B cell (primary cell): ENCODE measurements at regions of chr19 and their contacts with region 1.

Region 1: DNA sequence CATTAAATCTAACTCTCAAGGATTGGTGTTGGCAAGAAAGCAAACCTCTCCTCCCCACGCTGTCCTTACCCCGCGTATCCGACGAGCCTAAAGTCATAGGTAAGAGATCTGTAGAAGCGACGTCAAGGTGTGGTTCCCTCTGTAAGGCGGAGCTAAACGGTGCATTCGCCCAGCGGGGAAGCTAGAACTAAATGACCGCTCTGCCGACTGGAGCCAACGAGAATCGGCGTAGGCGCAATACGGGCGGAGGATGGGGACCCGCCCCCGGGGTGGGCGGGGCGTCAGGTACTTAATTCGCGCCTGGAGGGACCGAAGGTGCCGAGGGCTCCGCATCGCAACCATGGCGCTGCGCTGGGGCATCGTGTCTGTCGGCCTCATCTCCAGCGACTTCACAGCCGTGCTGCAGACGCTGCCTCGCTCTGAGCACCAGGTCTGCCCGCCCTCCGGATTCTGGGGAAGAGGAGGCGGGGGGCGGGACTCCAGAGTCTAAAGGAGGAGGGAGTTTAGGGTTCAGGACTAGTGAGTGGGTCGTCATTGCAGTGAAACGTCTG is at the start of gene DHDH:
- DNase-seq: peak; percentile 87
- ATAC-seq: peak; percentile 98
- H3K4me3 ChIP-seq: peak within 1 kb of the TSS; percentile 32 to 67 (median 47)
- H3K4me3 Mint-ChIP-seq: peak within 1 kb of the TSS; percentile 91
- H3K27ac ChIP-seq: no peak within 1 kb of the TSS
- H3K27ac Mint-ChIP-seq: peak within 1 kb of the TSS; percentile 41
- H3K4me1 ChIP-seq: peaks cover 12 to 15% of the 10 kb centered on the region in 2 donors
- H3K4me1 Mint-ChIP-seq: peaks cover 11% of the 10 kb centered on the region
- H3K27me3 ChIP-seq: peaks cover 0 to 10% (median 3%) of the 10 kb centered on the region in 4 experiments
- H3K27me3 Mint-ChIP-seq: peaks cover 12% of the 10 kb centered on the region
- CTCF ChIP-seq: no peak
- total RNA-seq, gene DHDH: 0.64 TPM in 1 of 2 replicates, not detected in the other

Region 2: DNA sequence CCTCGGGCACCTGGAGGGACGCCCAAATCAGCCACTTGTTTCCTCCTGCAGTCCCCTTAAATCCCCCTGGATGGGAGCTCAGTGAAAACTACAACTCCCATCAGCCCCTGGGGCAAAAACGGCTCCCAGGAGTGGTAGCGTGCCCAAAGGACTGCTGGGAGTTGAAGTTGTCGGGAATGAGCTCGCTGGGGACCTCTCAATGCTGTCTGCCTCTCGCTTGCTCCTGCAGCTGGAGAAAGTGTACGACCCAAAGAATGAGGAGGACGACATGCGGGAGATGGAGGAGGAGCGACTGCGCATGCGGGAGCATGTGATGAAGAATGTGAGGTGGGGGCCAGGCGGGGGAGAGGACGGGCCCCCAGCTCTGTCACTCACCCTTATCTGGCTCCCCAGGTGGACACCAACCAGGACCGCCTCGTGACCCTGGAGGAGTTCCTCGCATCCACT is 14.6 kb before region 1 on chr19:
- CTCF ChIA-PET with region 1: no interaction called
- POLR2A ChIA-PET with region 1: no interaction called
- intact Hi-C with region 1: no loop called
- DNase-seq: no peak
- ATAC-seq: no peak
- H3K4me3 ChIP-seq: no peak overlapping the region
- H3K4me3 Mint-ChIP-seq: no peak overlapping the region
- H3K27ac ChIP-seq: no peak overlapping the region
- H3K27ac Mint-ChIP-seq: no peak overlapping the region
- H3K4me1 ChIP-seq: peaks cover 5 to 6% of the 10 kb centered on the region in 2 donors
- H3K4me1 Mint-ChIP-seq: peaks cover 11% of the 10 kb centered on the region
- H3K27me3 ChIP-seq: no peaks in the 10 kb centered on the region
- H3K27me3 Mint-ChIP-seq: no peaks in the 10 kb centered on the region
- CTCF ChIP-seq: no peak

Region 3: DNA sequence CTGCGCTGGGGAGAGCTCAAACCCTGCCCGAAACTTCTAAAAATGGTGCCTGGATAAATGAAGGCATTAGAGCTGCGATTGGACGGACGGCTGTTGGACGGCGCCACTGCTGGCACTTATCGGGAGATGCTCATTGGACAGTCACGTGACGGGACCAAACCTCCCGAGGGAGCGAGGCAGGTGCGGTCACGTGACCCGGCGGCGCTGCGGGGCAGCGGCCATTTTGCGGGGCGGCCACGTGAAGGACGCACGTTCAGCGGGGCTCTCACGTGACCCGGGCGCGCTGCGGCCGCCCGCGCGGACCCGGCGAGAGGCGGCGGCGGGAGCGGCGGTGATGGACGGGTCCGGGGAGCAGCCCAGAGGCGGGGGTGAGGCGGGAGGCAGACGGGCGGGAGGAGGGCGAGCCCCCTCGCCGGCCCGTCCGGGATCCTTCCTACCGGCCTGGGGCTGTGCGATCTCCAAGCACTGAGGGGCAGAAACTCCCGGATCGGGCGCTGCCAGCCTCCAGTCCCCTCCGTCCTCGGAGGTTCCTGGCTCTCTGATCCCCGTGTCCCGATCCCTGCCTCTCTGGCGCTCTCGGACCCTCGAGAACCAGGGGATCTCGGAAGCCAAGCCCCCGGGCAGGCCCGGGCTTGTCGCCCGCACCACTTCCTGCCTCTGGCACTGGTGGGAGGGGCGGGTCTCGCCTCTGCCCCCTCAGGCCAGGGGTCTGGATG is 21.3 kb after region 1 on chr19 and contains the start of gene BAX:
- CTCF ChIA-PET with region 1: interaction called, 3 read pairs
- POLR2A ChIA-PET with region 1: no interaction called
- intact Hi-C with region 1: loop called (anchors 1 kb)
- DNase-seq: peak; percentile 92
- ATAC-seq: peak; percentile 88
- H3K4me3 ChIP-seq: peak within 1 kb of the TSS; percentile 47 to 99 (median 87)
- H3K4me3 Mint-ChIP-seq: peak within 1 kb of the TSS; percentile 85
- H3K27ac ChIP-seq: peak within 1 kb of the TSS; percentile 84 to 89
- H3K27ac Mint-ChIP-seq: peak within 1 kb of the TSS; percentile 92
- H3K4me1 ChIP-seq: peaks cover 6 to 16% of the 10 kb centered on the region in 2 donors
- H3K4me1 Mint-ChIP-seq: peaks cover 20% of the 10 kb centered on the region
- H3K27me3 ChIP-seq: no peaks in the 10 kb centered on the region
- H3K27me3 Mint-ChIP-seq: no peaks in the 10 kb centered on the region
- CTCF ChIP-seq: no peak
- total RNA-seq, gene BAX: 92.7 and 95.3 TPM in 2 replicates

Region 4: GRCh38 chr19:48999481-49000325 is 66.2 kb after region 1 on chr19:
- CTCF ChIA-PET with region 1: no interaction called
- POLR2A ChIA-PET with region 1: no interaction called
- intact Hi-C with region 1: no loop called
- DNase-seq: peak; percentile 68
- ATAC-seq: peak; percentile 75
- H3K4me3 ChIP-seq: no peak overlapping the region
- H3K4me3 Mint-ChIP-seq: no peak overlapping the region
- H3K27ac ChIP-seq: no peak overlapping the region
- H3K27ac Mint-ChIP-seq: no peak overlapping the region
- H3K4me1 ChIP-seq: peaks cover 0 to 11% of the 10 kb centered on the region in 2 donors
- H3K4me1 Mint-ChIP-seq: peaks cover 11% of the 10 kb centered on the region
- H3K27me3 ChIP-seq: no peaks in the 10 kb centered on the region
- H3K27me3 Mint-ChIP-seq: no peaks in the 10 kb centered on the region
- CTCF ChIP-seq: peak; percentile 75

Region 5: DNA sequence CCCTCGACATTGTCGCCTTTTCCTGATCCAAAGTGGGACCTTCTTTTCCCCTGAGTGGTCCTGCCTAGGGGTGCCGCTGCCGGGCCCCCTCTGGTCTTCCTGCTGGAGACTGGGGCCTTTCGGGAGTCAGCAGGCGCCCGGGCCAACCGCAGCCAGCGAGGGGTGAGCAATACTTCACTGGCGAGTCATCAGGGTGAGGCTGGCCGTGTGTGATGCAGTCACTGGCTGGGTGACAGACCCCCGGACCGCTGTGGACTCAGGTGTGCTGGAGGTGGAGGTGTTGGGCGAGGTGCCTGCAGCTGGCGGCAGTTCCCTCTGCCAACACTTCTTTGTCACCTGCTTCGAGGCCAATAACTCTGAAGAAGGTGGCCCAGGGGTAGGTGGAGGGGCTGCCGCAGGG is 108.7 kb after region 1 on chr19:
- CTCF ChIA-PET with region 1: no interaction called
- POLR2A ChIA-PET with region 1: no interaction called
- intact Hi-C with region 1: no loop called
- DNase-seq: no peak
- ATAC-seq: no peak
- H3K4me3 ChIP-seq: no peak overlapping the region
- H3K4me3 Mint-ChIP-seq: no peak overlapping the region
- H3K27ac ChIP-seq: no peak overlapping the region
- H3K27ac Mint-ChIP-seq: no peak overlapping the region
- H3K4me1 ChIP-seq: no peaks in the 10 kb centered on the region
- H3K4me1 Mint-ChIP-seq: no peaks in the 10 kb centered on the region
- H3K27me3 ChIP-seq: no peaks in the 10 kb centered on the region
- H3K27me3 Mint-ChIP-seq: peaks cover 9% of the 10 kb centered on the region
- CTCF ChIP-seq: no peak